ENCODE measurements at regions of chr5 and their contacts with region 1.

Region 1: GRCh38 chr5:31825518-31826068 is 186.7 kb downstream of the PDZD2 start:
- DNase-seq: peak; percentile 7
- H3K4me3 ChIP-seq: no peak overlapping the region
- CTCF ChIP-seq: peak; percentile 38

Region 2: GRCh38 chr5:31770998-31771397 is 54.6 kb before region 1 on chr5:
- CTCF ChIA-PET with region 1: no interaction called
- POLR2A ChIA-PET with region 1: no interaction called
- DNase-seq: no peak
- H3K4me3 ChIP-seq: no peak overlapping the region
- CTCF ChIP-seq: no peak

Region 3: DNA sequence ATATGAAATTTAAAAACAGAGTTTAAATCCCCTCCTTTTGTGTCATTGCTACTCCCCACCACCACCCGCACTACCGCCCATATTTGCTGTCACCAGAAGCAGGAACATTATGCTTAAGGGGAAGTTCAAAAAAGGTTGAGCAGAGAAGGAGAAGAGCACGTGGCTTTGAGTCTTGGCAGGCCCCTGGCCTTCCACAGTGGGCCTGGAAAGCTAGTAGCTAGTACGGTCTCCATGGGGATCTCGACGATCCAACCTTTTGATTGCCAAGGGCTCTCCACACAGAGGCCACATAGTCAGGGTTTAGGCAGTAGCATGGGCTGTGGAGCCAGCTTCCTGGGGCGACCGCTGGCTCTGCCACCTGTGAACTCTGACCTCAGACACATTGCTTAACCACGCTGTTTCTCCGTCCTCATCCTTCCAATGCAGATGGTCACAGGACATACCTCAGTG is 258.4 kb after region 1 on chr5:
- CTCF ChIA-PET with region 1: interaction called, 195 read pairs
- POLR2A ChIA-PET with region 1: no interaction called
- DNase-seq: no peak
- H3K4me3 ChIP-seq: no peak overlapping the region
- CTCF ChIP-seq: no peak